GM12878 (cell line): ENCODE measurements at regions of chr22 and their contacts with region 1.

Region 1: GRCh38 chr22:42277988-42278776 is 7.7 kb upstream of the TCF20 start:
- DNase-seq: no peak
- ATAC-seq: peak; percentile 94
- H3K4me3 ChIP-seq: no peak overlapping the region
- H3K27ac ChIP-seq: no peak overlapping the region
- H3K4me1 ChIP-seq: peaks cover 15% of the 10 kb centered on the region
- H3K27me3 ChIP-seq: no peaks in the 10 kb centered on the region
- CTCF ChIP-seq: peak; percentile 26 to 53 (median 39); a peak in 4 of 6 replicates
- EP300 ChIP-seq: no peak
- POLR2A ChIP-seq: no peak
- RAD21 ChIP-seq: peak; percentile 60

Region 2: DNA sequence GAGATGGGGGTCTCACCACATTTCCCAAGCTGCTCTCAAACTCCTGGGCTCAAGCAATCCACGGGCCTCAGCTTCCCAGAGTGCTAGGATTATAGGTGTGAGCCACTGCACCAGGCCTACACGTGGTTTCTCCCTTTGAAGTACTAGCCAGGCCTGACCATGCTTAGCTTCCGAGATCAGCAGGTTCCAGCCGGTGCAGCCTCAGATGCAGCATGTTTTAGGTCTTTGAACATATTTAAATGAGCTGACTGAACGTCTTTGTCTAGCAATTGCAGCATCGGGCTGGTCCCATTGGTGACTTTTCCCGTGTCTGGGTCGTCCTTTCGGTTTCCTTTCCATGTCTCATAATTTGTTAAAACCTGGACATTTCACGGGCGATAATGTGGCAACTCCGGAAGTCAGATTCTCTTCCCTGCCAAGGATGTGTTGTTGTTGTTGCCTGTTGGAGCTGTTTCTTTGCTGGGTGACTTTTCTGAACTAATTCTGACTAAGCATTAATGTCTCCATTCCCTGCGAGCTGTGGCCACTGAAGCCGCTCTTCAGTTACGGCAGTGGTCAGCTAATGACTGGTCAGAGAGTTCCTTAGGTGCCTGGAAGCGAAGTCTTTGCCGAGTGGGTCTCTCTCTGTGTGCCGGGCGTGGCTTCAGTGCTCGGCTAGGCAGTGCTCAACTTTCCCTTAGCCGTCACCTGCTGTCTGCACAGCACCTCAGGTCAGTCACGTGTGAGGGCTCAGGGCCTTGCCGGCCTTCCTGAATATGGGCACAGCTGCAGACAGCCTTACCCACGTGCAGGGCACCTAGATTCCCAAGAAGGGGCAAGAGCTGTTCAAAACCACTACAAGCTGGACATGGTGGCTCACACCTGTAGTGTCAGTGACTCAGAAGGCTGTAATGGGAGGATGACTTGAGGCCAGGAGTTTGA is 143.8 kb before region 1 on chr22:
- CTCF ChIA-PET with region 1: no interaction called
- POLR2A ChIA-PET with region 1: no interaction called
- RAD21 ChIA-PET with region 1: no interaction called
- SMC1A ChIA-PET with region 1: no interaction called
- in situ Hi-C with region 1: no loop called
- intact Hi-C with region 1: no loop called
- DNase-seq: no peak
- ATAC-seq: peak; percentile 7; the same call in 1 of the 3 replicates
- H3K4me3 ChIP-seq: no peak overlapping the region
- H3K27ac ChIP-seq: no peak overlapping the region
- H3K4me1 ChIP-seq: no peaks in the 10 kb centered on the region
- H3K27me3 ChIP-seq: no peaks in the 10 kb centered on the region
- CTCF ChIP-seq: no peak
- EP300 ChIP-seq: no peak
- POLR2A ChIP-seq: no peak
- RAD21 ChIP-seq: no peak

Region 3: GRCh38 chr22:42313804-42314581 is 35.8 kb after region 1 on chr22:
- CTCF ChIA-PET with region 1: interaction called, 12 read pairs
- POLR2A ChIA-PET with region 1: interaction called, 3 read pairs
- RAD21 ChIA-PET with region 1: interaction called, 5 read pairs
- SMC1A ChIA-PET with region 1: interaction called, 3 read pairs
- in situ Hi-C with region 1: no loop called
- intact Hi-C with region 1: no loop called
- DNase-seq: no peak
- ATAC-seq: peak; percentile 67
- H3K4me3 ChIP-seq: no peak overlapping the region
- H3K27ac ChIP-seq: no peak overlapping the region
- H3K4me1 ChIP-seq: peaks cover 4% of the 10 kb centered on the region
- H3K27me3 ChIP-seq: no peaks in the 10 kb centered on the region; a peak in 1 of 4 replicates
- CTCF ChIP-seq: peak; percentile 33 to 47 (median 35); a peak in 4 of 6 replicates
- EP300 ChIP-seq: no peak
- POLR2A ChIP-seq: no peak
- RAD21 ChIP-seq: peak; percentile 57

Region 4: DNA sequence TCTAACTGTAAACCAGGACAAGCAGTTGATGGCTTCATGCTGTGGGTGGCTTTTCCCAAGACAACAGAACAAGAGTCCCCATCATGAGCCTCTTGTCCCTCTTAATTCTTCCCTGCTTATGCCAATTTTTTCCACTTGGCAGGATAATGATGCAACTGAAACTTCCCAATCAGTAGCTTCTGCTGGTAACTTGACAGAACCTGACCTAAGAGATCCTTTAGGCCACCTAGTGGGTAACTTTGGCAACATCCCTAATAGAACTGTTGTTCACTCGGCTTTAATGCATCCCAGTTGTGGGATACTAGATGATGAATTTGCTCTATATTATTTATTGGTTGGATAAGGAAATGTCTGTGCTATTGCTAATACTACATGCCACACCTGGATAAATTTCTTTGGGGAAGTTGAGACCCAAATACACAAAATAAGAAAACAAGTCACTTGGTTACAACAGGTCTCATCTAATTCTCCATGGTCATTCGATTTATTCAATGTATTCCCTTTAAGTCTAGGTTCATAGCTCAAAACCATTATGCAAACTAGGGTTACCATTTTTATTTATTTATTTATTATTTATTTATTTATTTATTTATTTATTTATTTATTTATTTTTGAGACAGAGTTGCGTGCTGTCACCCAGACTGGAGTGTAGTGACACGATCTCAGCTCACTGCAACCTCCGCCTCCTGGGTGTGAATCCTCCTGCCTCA is 195.5 kb after region 1 on chr22:
- CTCF ChIA-PET with region 1: interaction called, 10 read pairs
- POLR2A ChIA-PET with region 1: no interaction called
- RAD21 ChIA-PET with region 1: interaction called, 4 read pairs
- SMC1A ChIA-PET with region 1: interaction called, 5 read pairs
- in situ Hi-C with region 1: no loop called
- intact Hi-C with region 1: no loop called
- DNase-seq: no peak
- ATAC-seq: peak; percentile 89
- H3K4me3 ChIP-seq: no peak overlapping the region
- H3K27ac ChIP-seq: no peak overlapping the region
- H3K4me1 ChIP-seq: no peaks in the 10 kb centered on the region
- H3K27me3 ChIP-seq: 0 out of 4 replicates have a peak, but pooled peaks cover 1 to 3% of the 10 kb centered on the region in 2 experiments
- CTCF ChIP-seq: peak; percentile 67 to 73 (median 70)
- EP300 ChIP-seq: no peak
- POLR2A ChIP-seq: no peak
- RAD21 ChIP-seq: peak; percentile 68